ENCODE measurements at regions of chr1 and their contacts with region 1.

Region 1: DNA sequence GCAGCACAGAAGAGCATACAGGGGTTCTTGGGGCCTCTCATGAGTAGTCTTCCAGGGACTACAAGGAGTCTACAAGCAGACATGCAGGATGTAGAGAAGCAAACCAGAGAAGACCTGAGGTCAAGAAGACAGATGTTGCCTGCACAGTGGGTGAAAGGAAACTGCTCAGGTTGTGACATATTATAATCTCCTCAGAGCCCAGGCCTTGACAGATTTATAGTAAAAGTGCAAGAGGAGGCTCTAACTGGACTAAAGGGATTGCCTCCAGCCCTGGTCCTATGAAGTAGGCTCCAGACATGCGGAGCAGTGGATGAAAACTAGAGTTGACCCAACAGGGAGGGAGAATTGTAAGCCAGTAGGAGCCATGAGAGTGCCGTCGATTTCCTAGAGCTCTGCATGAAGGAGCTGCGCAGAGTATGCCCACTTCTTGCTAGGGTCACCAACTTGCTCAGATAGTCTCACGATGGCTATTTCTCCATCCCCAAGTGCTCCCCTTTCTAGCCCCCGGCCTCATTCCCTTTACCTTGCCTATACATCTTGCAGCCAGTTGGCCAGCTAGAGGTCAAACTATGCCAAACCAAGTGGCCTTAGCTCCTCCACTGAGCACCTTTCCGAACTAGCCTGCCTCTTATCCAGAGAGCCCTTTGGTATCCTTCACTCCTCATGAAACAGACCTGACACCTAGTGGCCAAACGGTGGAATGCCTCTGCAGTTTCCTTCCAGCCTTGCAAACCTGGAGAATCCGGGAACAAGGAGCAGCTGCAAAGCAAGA is 36.2 kb upstream of the IPO9 start:
- DNase-seq: peak; percentile 85
- H3K4me3 ChIP-seq: peak overlapping the region in 1 of 2 experiments; percentile 4; a peak in 1 of 4 replicates
- H3K27ac ChIP-seq: peak overlapping the region; percentile 92 to 99
- H3K4me1 ChIP-seq: peaks cover 28 to 41% of the 10 kb centered on the region in 2 experiments
- H3K27me3 ChIP-seq: no peaks in the 10 kb centered on the region
- CTCF ChIP-seq: peak; percentile 98
- EP300 ChIP-seq: no peak
- RAD21 ChIP-seq: peak; percentile 99

Region 2: GRCh38 chr1:201511941-201512539 is 280.7 kb before region 1 on chr1:
- CTCF ChIA-PET with region 1: interaction called, 26 read pairs
- POLR2A ChIA-PET with region 1: no interaction called
- DNase-seq: peak; percentile 44
- H3K4me3 ChIP-seq: no peak overlapping the region
- H3K27ac ChIP-seq: no peak overlapping the region
- H3K4me1 ChIP-seq: peaks cover 14 to 15% of the 10 kb centered on the region in 2 experiments; a peak in 2 of 4 replicates
- H3K27me3 ChIP-seq: no peaks in the 10 kb centered on the region
- CTCF ChIP-seq: no peak
- EP300 ChIP-seq: no peak
- RAD21 ChIP-seq: no peak

Region 3: GRCh38 chr1:201545851-201546492 is 246.7 kb before region 1 on chr1:
- CTCF ChIA-PET with region 1: interaction called, 10 read pairs
- POLR2A ChIA-PET with region 1: no interaction called
- DNase-seq: peak; percentile 35
- H3K4me3 ChIP-seq: no peak overlapping the region
- H3K27ac ChIP-seq: no peak overlapping the region; a peak in 1 of 4 replicates
- H3K4me1 ChIP-seq: peaks cover 15 to 36% of the 10 kb centered on the region in 2 experiments
- H3K27me3 ChIP-seq: no peaks in the 10 kb centered on the region
- CTCF ChIP-seq: peak; percentile 23
- EP300 ChIP-seq: no peak
- RAD21 ChIP-seq: no peak

Region 4: GRCh38 chr1:201709564-201710295 is 83.0 kb before region 1 on chr1:
- CTCF ChIA-PET with region 1: interaction called, 827 read pairs
- POLR2A ChIA-PET with region 1: interaction called, 3 read pairs
- DNase-seq: peak; percentile 87
- H3K4me3 ChIP-seq: no peak overlapping the region
- H3K27ac ChIP-seq: peak overlapping the region; percentile 62 to 98; a peak in 3 of 4 replicates
- H3K4me1 ChIP-seq: peaks cover 19 to 71% of the 10 kb centered on the region in 2 experiments; a peak in 3 of 4 replicates
- H3K27me3 ChIP-seq: no peaks in the 10 kb centered on the region
- CTCF ChIP-seq: peak; percentile 86
- EP300 ChIP-seq: no peak
- RAD21 ChIP-seq: peak; percentile 86

Region 5: GRCh38 chr1:201759194-201759815 is 33.4 kb before region 1 on chr1:
- CTCF ChIA-PET with region 1: interaction called, 44 read pairs
- POLR2A ChIA-PET with region 1: no interaction called
- DNase-seq: no peak
- H3K4me3 ChIP-seq: no peak overlapping the region
- H3K27ac ChIP-seq: peak overlapping the region; percentile 53 to 98
- H3K4me1 ChIP-seq: peaks cover 30 to 85% of the 10 kb centered on the region in 2 experiments
- H3K27me3 ChIP-seq: no peaks in the 10 kb centered on the region
- CTCF ChIP-seq: no peak
- EP300 ChIP-seq: no peak
- RAD21 ChIP-seq: no peak

Region 6: DNA sequence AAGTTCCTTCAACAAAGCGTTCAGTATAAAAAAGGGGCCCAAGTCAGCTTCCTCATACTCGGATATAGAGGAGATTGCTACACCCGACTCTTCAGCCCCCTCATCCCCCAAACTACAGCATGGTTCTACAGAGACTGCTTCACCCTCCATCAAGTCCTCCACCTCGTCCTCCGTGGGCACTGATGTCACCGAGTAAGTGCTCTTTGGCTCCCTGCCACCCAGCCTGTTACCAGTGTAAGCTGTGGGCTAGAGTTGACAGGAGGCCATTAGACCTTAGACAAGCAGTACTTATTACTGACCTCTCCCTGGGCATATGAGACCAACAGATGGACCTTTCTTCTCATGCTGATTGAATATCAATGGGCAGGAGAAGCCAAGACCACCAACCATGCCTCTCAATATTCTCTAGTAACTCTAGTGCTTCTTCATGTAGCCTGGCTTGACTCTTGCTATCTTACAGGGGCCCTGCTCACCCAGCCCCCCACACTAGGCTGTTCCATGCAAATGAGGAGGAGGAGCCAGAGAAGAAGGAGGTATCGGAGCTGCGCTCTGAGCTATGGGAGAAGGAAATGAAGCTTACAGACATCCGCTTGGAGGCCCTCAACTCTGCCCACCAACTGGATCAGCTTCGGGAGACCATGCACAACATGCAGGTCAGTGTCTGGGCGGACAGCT is 15.4 kb after region 1 on chr1:
- CTCF ChIA-PET with region 1: interaction called, 37 read pairs
- POLR2A ChIA-PET with region 1: no interaction called
- DNase-seq: no peak
- H3K4me3 ChIP-seq: no peak overlapping the region
- H3K27ac ChIP-seq: no peak overlapping the region
- H3K4me1 ChIP-seq: no peaks in the 10 kb centered on the region
- H3K27me3 ChIP-seq: no peaks in the 10 kb centered on the region
- CTCF ChIP-seq: no peak
- EP300 ChIP-seq: no peak
- RAD21 ChIP-seq: no peak

Region 7: GRCh38 chr1:201964261-201964660 is 171.5 kb after region 1 on chr1:
- CTCF ChIA-PET with region 1: no interaction called
- POLR2A ChIA-PET with region 1: no interaction called
- DNase-seq: no peak
- H3K4me3 ChIP-seq: no peak overlapping the region
- H3K27ac ChIP-seq: no peak overlapping the region
- H3K4me1 ChIP-seq: no peaks in the 10 kb centered on the region
- H3K27me3 ChIP-seq: no peaks in the 10 kb centered on the region
- CTCF ChIP-seq: no peak
- EP300 ChIP-seq: no peak
- RAD21 ChIP-seq: no peak

Measured in SK-N-SH (cell line).